Vagina (tissue), 2 donors: ENCODE measurements at regions of chr17 and their contacts with region 1.

Region 1: GRCh38 chr17:20706751-20707374 is 127.3 kb downstream of the CDRT15L2 start:
- DNase-seq: no peak
- H3K4me3 ChIP-seq: no peak overlapping the region
- H3K27ac ChIP-seq: no peak overlapping the region
- H3K4me1 ChIP-seq: no peaks in the 10 kb centered on the region
- H3K27me3 ChIP-seq: no peaks in the 10 kb centered on the region
- CTCF ChIP-seq: no peak
- POLR2A ChIP-seq: no peak

Region 2: DNA sequence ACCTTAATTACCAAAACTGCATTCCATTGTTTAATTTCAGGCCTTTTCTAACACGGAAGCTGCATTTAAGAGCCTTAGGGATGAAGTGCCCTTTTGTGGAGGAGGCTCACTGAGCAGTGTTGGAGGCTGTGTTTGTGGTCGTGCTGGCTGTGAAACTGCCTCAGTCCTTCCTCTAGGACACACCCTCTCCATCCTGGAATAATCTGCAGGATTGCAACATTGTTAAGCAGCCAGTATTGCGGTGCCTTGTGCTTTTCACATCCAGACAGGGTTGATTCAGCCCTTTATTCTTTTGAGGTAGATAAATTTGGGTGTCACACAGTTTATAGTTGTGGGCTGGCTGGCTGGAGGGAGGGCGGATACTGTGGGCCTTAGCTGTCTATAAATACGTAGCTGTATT is 14.3 kb after region 1 on chr17:
- intact Hi-C with region 1: loop called (anchors 1 kb)
- DNase-seq: no peak
- H3K4me3 ChIP-seq: no peak overlapping the region
- H3K27ac ChIP-seq: no peak overlapping the region
- H3K4me1 ChIP-seq: no peaks in the 10 kb centered on the region
- H3K27me3 ChIP-seq: no peaks in the 10 kb centered on the region
- CTCF ChIP-seq: no peak
- POLR2A ChIP-seq: no peak

Region 3: GRCh38 chr17:20852239-20852989 is 145.6 kb after region 1 on chr17:
- intact Hi-C with region 1: no loop called
- DNase-seq: no peak
- H3K4me3 ChIP-seq: peak overlapping the region; percentile 22 to 24
- H3K27ac ChIP-seq: no peak overlapping the region
- H3K4me1 ChIP-seq: peaks cover 17% of the 10 kb centered on the region
- H3K27me3 ChIP-seq: no peaks in the 10 kb centered on the region
- CTCF ChIP-seq: no peak
- POLR2A ChIP-seq: no peak

Region 4: GRCh38 chr17:20908373-20909273 is 201.8 kb after region 1 on chr17:
- intact Hi-C with region 1: no loop called
- DNase-seq: peak in 1 of 2 donors; percentile 88
- H3K4me3 ChIP-seq: peak overlapping the region; percentile 44 to 49
- H3K27ac ChIP-seq: peak overlapping the region; percentile 85
- H3K4me1 ChIP-seq: peaks cover 14% of the 10 kb centered on the region
- H3K27me3 ChIP-seq: no peaks in the 10 kb centered on the region
- CTCF ChIP-seq: peak in 2 of 3 experiments; percentile 44 to 72
- POLR2A ChIP-seq: peak in 1 of 2 donors; percentile 13

Region 5: DNA sequence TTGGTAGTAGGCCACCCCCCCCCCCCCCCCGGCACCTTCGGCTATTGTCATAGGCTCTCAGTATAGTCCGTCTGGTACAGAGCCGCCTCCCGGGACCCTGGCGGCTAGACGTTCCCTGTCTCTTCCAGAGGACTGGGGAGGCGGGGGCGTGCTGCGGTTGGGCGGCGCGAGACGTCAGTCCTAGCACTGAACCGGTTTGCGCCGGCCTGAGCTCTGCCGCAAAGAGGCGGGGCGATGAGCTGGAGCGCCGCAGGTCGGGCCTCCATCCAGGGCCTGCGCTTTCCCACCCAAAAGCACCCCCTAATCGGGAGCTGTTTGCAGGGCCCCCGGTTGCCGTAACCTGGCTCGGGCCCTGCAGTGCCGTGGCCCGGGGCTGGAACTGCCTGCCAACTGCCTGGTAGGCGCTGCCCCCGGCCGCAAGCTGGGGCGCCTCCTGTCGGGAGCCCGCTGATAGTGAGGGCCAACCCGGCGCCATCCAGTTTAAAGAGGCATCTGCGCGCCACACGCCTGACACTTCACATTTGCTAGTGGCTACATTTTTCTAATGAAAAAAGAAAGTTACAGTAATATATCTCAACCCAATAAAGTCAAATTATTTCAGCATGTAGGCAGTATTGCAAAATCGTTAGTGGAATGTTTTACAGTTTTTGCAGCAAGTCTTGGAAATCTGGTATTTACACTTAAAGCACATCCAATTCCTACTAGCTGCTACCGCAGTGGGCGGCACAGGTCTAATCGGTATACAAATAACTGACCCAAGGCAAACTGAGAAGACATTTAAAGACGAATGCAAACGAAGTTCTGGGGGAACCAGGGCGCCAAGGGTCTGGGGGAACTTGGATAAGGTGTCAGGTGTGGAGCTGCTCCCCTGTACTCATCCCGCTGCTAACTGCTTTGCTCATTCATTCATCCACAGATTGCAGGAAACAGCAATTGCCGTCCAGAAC is 336.7 kb after region 1 on chr17:
- intact Hi-C with region 1: no loop called
- DNase-seq: peak in 1 of 2 donors; percentile 99
- H3K4me3 ChIP-seq: peak overlapping the region; percentile 76 to 88
- H3K27ac ChIP-seq: peak overlapping the region; percentile 100
- H3K4me1 ChIP-seq: peaks cover 39% of the 10 kb centered on the region
- H3K27me3 ChIP-seq: no peaks in the 10 kb centered on the region
- CTCF ChIP-seq: peak; percentile 53 to 89 (median 78)
- POLR2A ChIP-seq: peak in 1 of 2 donors; percentile 55